ENCODE measurements at regions of chr4 and their contacts with region 1.

Region 1: GRCh38 chr4:2811830-2812611 is 19.1 kb downstream of the SH3BP2 start:
- DNase-seq: peak; percentile 51 to 75 (median 58)
- H3K4me3 ChIP-seq: peak overlapping the region; percentile 24 to 74
- H3K4me3 Mint-ChIP-seq: peak overlapping the region; percentile 84 to 100 (median 94)
- H3K27ac ChIP-seq: peak overlapping the region; percentile 78
- H3K27ac Mint-ChIP-seq: peak overlapping the region; percentile 96 to 99 (median 98)
- H3K4me1 ChIP-seq: peaks cover 56% of the 10 kb centered on the region
- H3K4me1 Mint-ChIP-seq: peaks cover 34 to 65% (median 48%) of the 10 kb centered on the region in 4 donors
- H3K27me3 ChIP-seq: no peaks in the 10 kb centered on the region
- H3K27me3 Mint-ChIP-seq: no peaks in the 10 kb centered on the region

Region 2: GRCh38 chr4:2714061-2714770 is 97.8 kb before region 1 on chr4:
- CTCF ChIA-PET with region 1: no interaction called
- POLR2A ChIA-PET with region 1: no interaction called
- intact Hi-C with region 1: no loop called
- DNase-seq: peak; percentile 45 to 67 (median 53)
- H3K4me3 ChIP-seq: no peak overlapping the region
- H3K4me3 Mint-ChIP-seq: peak overlapping the region in 5 of 8 donors; percentile 15 to 57 (median 44)
- H3K27ac ChIP-seq: peak overlapping the region; percentile 12
- H3K27ac Mint-ChIP-seq: peak overlapping the region; percentile 68 to 94 (median 88)
- H3K4me1 ChIP-seq: peaks cover 18% of the 10 kb centered on the region
- H3K4me1 Mint-ChIP-seq: peaks cover 16 to 25% (median 21%) of the 10 kb centered on the region in 4 donors
- H3K27me3 ChIP-seq: no peaks in the 10 kb centered on the region
- H3K27me3 Mint-ChIP-seq: no peaks in the 10 kb centered on the region

Region 3: GRCh38 chr4:2761035-2761923 is 50.7 kb before region 1 on chr4:
- CTCF ChIA-PET with region 1: interaction called, 7 read pairs
- POLR2A ChIA-PET with region 1: interaction called, 3 read pairs
- intact Hi-C with region 1: loop called (anchors 10 kb)
- DNase-seq: no peak
- H3K4me3 ChIP-seq: no peak overlapping the region
- H3K4me3 Mint-ChIP-seq: peak overlapping the region in 1 of 8 donors; percentile 17
- H3K27ac ChIP-seq: no peak overlapping the region
- H3K27ac Mint-ChIP-seq: peak overlapping the region in 3 of 7 donors; percentile 37 to 80 (median 60)
- H3K4me1 ChIP-seq: peaks cover 14% of the 10 kb centered on the region
- H3K4me1 Mint-ChIP-seq: peaks cover 0 to 21% (median 9%) of the 10 kb centered on the region in 4 donors
- H3K27me3 ChIP-seq: no peaks in the 10 kb centered on the region
- H3K27me3 Mint-ChIP-seq: no peaks in the 10 kb centered on the region

Region 4: GRCh38 chr4:2792711-2793585 is 19.1 kb before region 1 on chr4 and contains the start of gene SH3BP2:
- CTCF ChIA-PET with region 1: interaction called, 3 read pairs
- POLR2A ChIA-PET with region 1: interaction called, 77 read pairs
- intact Hi-C with region 1: loop called (anchors 1 kb)
- DNase-seq: peak in 4 of 5 donors; percentile 40 to 67 (median 41)
- H3K4me3 ChIP-seq: peak within 1 kb of the TSS in 1 of 2 donors; percentile 53
- H3K4me3 Mint-ChIP-seq: peak within 1 kb of the TSS; percentile 78 to 90 (median 88)
- H3K27ac ChIP-seq: peak within 1 kb of the TSS; percentile 38
- H3K27ac Mint-ChIP-seq: peak within 1 kb of the TSS; percentile 70 to 90 (median 81)
- H3K4me1 ChIP-seq: peaks cover 40% of the 10 kb centered on the region
- H3K4me1 Mint-ChIP-seq: peaks cover 21 to 65% (median 49%) of the 10 kb centered on the region in 4 donors
- H3K27me3 ChIP-seq: no peaks in the 10 kb centered on the region
- H3K27me3 Mint-ChIP-seq: no peaks in the 10 kb centered on the region
- total RNA-seq, gene SH3BP2: 37.9 to 44.3 TPM

Region 5: DNA sequence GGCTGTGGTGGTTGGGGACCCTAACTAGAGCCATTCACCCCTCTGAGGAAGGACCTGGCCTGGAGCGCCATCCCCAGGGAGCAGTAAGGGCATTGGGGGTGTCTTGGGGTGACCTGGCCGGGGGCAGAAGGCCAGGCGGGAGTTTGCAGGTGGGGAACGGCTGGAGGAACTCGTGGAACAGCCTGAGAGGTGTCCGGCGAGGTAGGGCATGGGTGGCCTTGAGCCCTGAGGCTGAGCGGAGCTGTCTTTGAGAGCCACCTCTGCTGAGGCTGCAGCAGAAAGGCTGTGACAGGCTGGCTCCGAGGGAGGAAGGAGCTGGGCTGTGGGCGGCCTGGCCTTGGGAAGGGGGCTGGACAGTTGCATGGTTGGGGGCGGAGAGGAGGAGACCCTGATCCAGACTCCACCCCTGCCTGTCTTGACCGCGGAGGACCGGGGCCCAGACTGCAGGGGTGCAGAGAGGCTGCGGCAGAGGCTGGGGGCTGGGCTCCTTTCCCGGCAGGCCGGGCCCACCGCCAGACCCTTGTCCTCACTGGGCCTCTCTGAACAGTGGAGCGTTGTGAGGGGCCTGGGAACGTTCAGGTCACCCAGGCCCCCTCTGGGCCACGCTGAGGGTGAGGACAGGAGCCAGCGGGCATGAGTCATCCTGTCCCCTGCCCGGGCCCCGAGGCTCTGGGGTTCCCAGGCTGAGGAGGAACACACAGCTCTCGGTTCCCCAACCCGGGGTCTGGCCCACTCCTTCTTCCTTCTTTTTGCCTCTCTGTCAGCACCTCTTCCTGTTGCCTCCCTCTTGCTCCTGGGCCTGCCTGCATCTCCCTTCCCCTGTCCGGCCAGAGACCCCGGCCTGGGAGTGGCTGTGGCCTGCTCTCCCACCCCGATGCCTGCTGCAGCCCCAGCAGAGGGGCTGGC is 11.1 kb before region 1 on chr4:
- CTCF ChIA-PET with region 1: interaction called, 3 read pairs
- POLR2A ChIA-PET with region 1: interaction called, 77 read pairs
- intact Hi-C with region 1: loop called (anchors 1 kb)
- DNase-seq: peak in 1 of 5 donors; percentile 29
- H3K4me3 ChIP-seq: no peak overlapping the region
- H3K4me3 Mint-ChIP-seq: peak overlapping the region; percentile 18 to 73 (median 55)
- H3K27ac ChIP-seq: peak overlapping the region; percentile 74
- H3K27ac Mint-ChIP-seq: peak overlapping the region in 6 of 7 donors; percentile 48 to 91 (median 78)
- H3K4me1 ChIP-seq: peaks cover 48% of the 10 kb centered on the region
- H3K4me1 Mint-ChIP-seq: peaks cover 19 to 54% (median 31%) of the 10 kb centered on the region in 4 donors
- H3K27me3 ChIP-seq: no peaks in the 10 kb centered on the region
- H3K27me3 Mint-ChIP-seq: no peaks in the 10 kb centered on the region

Region 6: DNA sequence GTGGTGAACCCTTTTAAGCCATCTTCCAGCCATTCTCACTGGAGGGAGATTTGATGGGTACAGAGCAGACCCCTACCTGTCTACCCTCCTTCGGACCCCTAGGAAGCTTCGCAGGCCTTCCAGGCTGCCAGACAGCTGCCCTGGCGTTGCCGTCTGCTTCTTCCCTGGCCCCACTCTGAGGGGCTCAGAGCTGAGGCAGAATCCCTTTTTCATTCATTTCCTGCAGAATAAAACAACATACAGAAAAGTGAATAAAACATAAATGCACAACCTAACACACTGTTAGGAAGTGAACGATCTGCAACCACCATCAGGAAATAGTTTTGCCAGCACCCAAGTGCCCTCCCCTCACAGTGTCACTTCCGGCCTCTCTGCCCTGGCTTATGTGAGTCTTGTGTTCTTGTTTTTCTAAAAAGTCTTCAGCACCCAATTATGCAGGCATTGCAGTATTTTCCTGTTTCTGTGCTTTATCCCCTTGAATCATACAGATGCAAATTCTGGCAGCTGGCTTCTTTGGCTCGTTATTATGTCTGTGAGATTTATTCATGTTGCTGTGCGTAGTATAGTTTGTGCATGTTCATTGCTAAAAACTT is 26.0 kb after region 1 on chr4:
- CTCF ChIA-PET with region 1: interaction called, 3 read pairs
- POLR2A ChIA-PET with region 1: interaction called, 15 read pairs
- intact Hi-C with region 1: loop called (anchors 2 kb)
- DNase-seq: peak; percentile 75 to 89 (median 81)
- H3K4me3 ChIP-seq: peak overlapping the region; percentile 1 to 54
- H3K4me3 Mint-ChIP-seq: peak overlapping the region; percentile 69 to 92 (median 86)
- H3K27ac ChIP-seq: peak overlapping the region; percentile 55
- H3K27ac Mint-ChIP-seq: peak overlapping the region; percentile 76 to 95 (median 88)
- H3K4me1 ChIP-seq: peaks cover 74% of the 10 kb centered on the region
- H3K4me1 Mint-ChIP-seq: peaks cover 36 to 73% (median 47%) of the 10 kb centered on the region in 4 donors
- H3K27me3 ChIP-seq: no peaks in the 10 kb centered on the region
- H3K27me3 Mint-ChIP-seq: no peaks in the 10 kb centered on the region

Region 7: DNA sequence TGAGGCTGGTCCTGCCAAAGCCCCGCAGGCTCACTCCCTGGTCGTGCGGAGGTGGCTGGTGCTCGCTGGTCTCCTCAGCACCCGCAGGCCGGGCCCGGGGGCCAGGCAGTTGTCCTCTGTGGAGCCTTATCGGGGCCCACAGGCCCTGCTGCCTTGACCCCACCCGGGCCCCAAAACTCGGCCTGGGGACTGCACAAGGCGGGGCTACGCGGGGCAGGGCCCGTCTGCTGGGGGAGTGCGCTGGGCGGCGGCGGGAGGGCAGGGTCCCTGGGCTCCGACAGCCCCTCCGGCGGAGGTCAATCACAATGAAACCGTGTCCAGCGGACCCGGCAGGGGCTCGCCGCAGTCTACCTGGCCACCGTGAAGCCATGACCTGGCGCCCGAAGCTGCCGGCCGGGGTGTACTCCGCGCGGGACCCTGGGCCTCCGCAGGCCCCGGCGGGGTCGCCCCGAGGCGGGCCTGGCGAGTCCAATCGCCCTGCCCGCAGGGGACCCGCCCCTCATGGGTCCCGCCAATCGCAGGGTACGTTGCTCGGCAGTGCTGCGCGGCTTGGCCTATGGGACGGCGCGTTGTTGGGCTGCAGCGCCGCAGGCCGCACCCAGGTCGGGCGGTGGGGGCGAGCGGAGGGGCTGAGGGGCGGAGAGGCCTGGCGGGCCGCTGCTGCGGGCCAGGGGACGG is 31.4 kb after region 1 on chr4 and contains the start of gene ADD1:
- CTCF ChIA-PET with region 1: interaction called, 3 read pairs
- POLR2A ChIA-PET with region 1: interaction called, 15 read pairs
- intact Hi-C with region 1: loop called (anchors 2 kb)
- DNase-seq: peak; percentile 87 to 99 (median 93)
- H3K4me3 ChIP-seq: peak within 1 kb of the TSS; percentile 72 to 81
- H3K4me3 Mint-ChIP-seq: peak within 1 kb of the TSS; percentile 90 to 98 (median 94)
- H3K27ac ChIP-seq: peak within 1 kb of the TSS; percentile 84
- H3K27ac Mint-ChIP-seq: peak within 1 kb of the TSS; percentile 93 to 97 (median 95)
- H3K4me1 ChIP-seq: peaks cover 71% of the 10 kb centered on the region
- H3K4me1 Mint-ChIP-seq: peaks cover 37 to 72% (median 45%) of the 10 kb centered on the region in 4 donors
- H3K27me3 ChIP-seq: no peaks in the 10 kb centered on the region
- H3K27me3 Mint-ChIP-seq: no peaks in the 10 kb centered on the region
- total RNA-seq, gene ADD1: 289 to 293 TPM